ENCODE measurements at regions of chr21 and their contacts with region 1.

Region 1: DNA sequence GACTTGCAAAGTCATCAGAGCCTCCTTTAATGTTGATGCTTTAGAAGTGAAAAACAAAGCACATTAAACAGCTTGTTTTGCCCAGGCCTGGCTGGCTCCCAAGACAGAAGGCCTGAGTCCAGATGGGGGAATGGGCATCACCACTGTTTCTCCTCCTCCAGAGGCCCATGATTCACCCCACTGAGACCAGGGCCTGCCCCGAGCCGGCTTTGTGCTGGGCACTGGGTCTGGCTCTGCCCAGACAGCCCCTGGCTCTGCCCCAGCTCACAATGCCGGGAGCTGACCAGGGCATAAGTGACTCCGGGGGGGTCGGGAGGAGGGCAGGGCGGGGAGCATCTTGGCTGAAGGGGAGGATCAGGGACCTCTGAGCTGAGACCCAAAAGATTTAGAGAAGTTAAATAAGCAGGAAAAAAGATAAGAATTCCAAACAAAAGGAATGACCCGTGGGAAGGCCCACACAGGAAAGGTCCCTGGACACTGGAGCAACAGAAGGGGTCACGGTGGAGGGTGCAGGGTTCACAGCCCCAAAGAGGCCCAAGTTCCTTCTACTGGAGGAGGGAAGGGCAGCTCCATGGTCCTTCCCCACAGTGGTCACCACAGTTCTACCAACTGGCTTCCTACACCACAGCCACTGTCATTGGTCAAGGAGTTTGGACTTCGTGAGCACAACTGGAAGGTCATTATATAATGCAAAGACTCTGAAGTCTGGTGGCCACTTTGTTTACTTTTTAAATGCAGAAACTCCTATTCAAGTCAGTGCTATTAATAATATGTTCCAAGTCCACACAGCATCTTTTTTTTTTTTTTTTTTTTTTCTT is 5.5 kb downstream of the C2CD2 start:
- DNase-seq: no peak
- H3K4me3 ChIP-seq: peak overlapping the region in 1 of 3 donors; percentile 7
- H3K27ac ChIP-seq: peak overlapping the region; percentile 64 to 76
- H3K4me1 ChIP-seq: peaks cover 0 to 3% of the 10 kb centered on the region in 2 donors
- H3K27me3 ChIP-seq: no peaks in the 10 kb centered on the region
- CTCF ChIP-seq: no peak
- POLR2A ChIP-seq: no peak

Region 2: GRCh38 chr21:41920476-41920875 is 27.8 kb before region 1 on chr21:
- intact Hi-C with region 1: loop called (anchors 1 kb)
- DNase-seq: no peak
- H3K4me3 ChIP-seq: no peak overlapping the region
- H3K27ac ChIP-seq: peak overlapping the region; percentile 48 to 69
- H3K4me1 ChIP-seq: peaks cover 3 to 6% of the 10 kb centered on the region in 2 donors
- H3K27me3 ChIP-seq: no peaks in the 10 kb centered on the region
- CTCF ChIP-seq: no peak
- POLR2A ChIP-seq: no peak

Region 3: GRCh38 chr21:41979751-41980369 is 31.6 kb after region 1 on chr21:
- intact Hi-C with region 1: loop called (anchors 2 kb)
- DNase-seq: peak in 1 of 2 donors; percentile 11
- H3K4me3 ChIP-seq: no peak overlapping the region
- H3K27ac ChIP-seq: no peak overlapping the region
- H3K4me1 ChIP-seq: peaks cover 0 to under 1% of the 10 kb centered on the region in 2 donors
- H3K27me3 ChIP-seq: no peaks in the 10 kb centered on the region
- CTCF ChIP-seq: no peak
- POLR2A ChIP-seq: no peak